ENCODE measurements at regions of chr11 and their contacts with region 1.

Region 1: GRCh38 chr11:3971756-3972404 is 116.4 kb downstream of the STIM1 start:
- DNase-seq: peak; percentile 46
- ATAC-seq: peak; percentile 48; the same call in 1 of the 2 replicates
- H3K4me3 ChIP-seq: no peak overlapping the region
- H3K27ac ChIP-seq: no peak overlapping the region
- H3K4me1 ChIP-seq: no peaks in the 10 kb centered on the region
- H3K27me3 ChIP-seq: no peaks in the 10 kb centered on the region
- CTCF ChIP-seq: 0 out of 2 replicates have a peak, but pooled peaks have one; percentile 19
- POLR2A ChIP-seq: no peak
- RAD21 ChIP-seq: no peak; the same call in 1 of the 2 replicates

Region 2: GRCh38 chr11:3434976-3435375 is 536.9 kb before region 1 on chr11:
- CTCF ChIA-PET with region 1: no interaction called
- POLR2A ChIA-PET with region 1: no interaction called
- dilution Hi-C with region 1: no loop called
- in situ Hi-C with region 1: no loop called
- intact Hi-C with region 1: no loop called
- DNase-seq: no peak
- ATAC-seq: no peak
- H3K4me3 ChIP-seq: no peak overlapping the region
- H3K27ac ChIP-seq: no peak overlapping the region
- H3K4me1 ChIP-seq: no peaks in the 10 kb centered on the region
- H3K27me3 ChIP-seq: peaks cover 5% of the 10 kb centered on the region; the same call in 1 of the 2 replicates
- CTCF ChIP-seq: no peak
- POLR2A ChIP-seq: no peak
- RAD21 ChIP-seq: no peak

Region 3: GRCh38 chr11:3929649-3930048 is 42.2 kb before region 1 on chr11:
- CTCF ChIA-PET with region 1: no interaction called
- POLR2A ChIA-PET with region 1: no interaction called
- dilution Hi-C with region 1: no loop called
- in situ Hi-C with region 1: no loop called
- intact Hi-C with region 1: loop called (anchors 1 kb)
- DNase-seq: no peak
- ATAC-seq: no peak
- H3K4me3 ChIP-seq: no peak overlapping the region
- H3K27ac ChIP-seq: no peak overlapping the region
- H3K4me1 ChIP-seq: peaks cover 8% of the 10 kb centered on the region
- H3K27me3 ChIP-seq: no peaks in the 10 kb centered on the region
- CTCF ChIP-seq: no peak
- POLR2A ChIP-seq: no peak
- RAD21 ChIP-seq: no peak

Region 4: GRCh38 chr11:3959015-3959919 is 12.6 kb before region 1 on chr11:
- CTCF ChIA-PET with region 1: no interaction called
- POLR2A ChIA-PET with region 1: no interaction called
- dilution Hi-C with region 1: no loop called
- in situ Hi-C with region 1: no loop called
- intact Hi-C with region 1: no loop called
- DNase-seq: peak; percentile 71
- ATAC-seq: peak; percentile 77
- H3K4me3 ChIP-seq: no peak overlapping the region
- H3K27ac ChIP-seq: no peak overlapping the region
- H3K4me1 ChIP-seq: peaks cover 2% of the 10 kb centered on the region; the same call in 1 of the 2 replicates
- H3K27me3 ChIP-seq: no peaks in the 10 kb centered on the region
- CTCF ChIP-seq: 0 out of 2 replicates have a peak, but pooled peaks have one; percentile 13
- POLR2A ChIP-seq: no peak
- RAD21 ChIP-seq: no peak